K562 (cell line): ENCODE measurements at regions of chr9 and their contacts with region 1.

Region 1: GRCh38 chr9:6907772-6908381 is 150.1 kb downstream of the KDM4C start:
- DNase-seq: peak in 3 of 4 experiments; percentile 12 to 46 (median 13)
- ATAC-seq: peak; percentile 59
- H3K4me3 ChIP-seq: no peak overlapping the region
- H3K27ac ChIP-seq: no peak overlapping the region
- H3K4me1 ChIP-seq: no peaks in the 10 kb centered on the region; a peak in 2 of 5 replicates
- H3K27me3 ChIP-seq: no peaks in the 10 kb centered on the region
- CTCF ChIP-seq: peak in 2 of 3 experiments; percentile 37 to 77; a peak in 4 of 6 replicates
- EP300 ChIP-seq: no peak
- POLR2A ChIP-seq: no peak
- RAD21 ChIP-seq: peak; percentile 44 to 70; a peak in 3 of 4 replicates

Region 2: GRCh38 chr9:6827439-6827838 is 80.4 kb before region 1 on chr9:
- CTCF ChIA-PET with region 1: no interaction called
- POLR2A ChIA-PET with region 1: no interaction called
- in situ Hi-C with region 1: no loop called
- intact Hi-C with region 1: loop called (anchors 5 kb)
- DNase-seq: peak; percentile 24 to 60 (median 34)
- ATAC-seq: peak; percentile 80
- H3K4me3 ChIP-seq: no peak overlapping the region
- H3K27ac ChIP-seq: no peak overlapping the region
- H3K4me1 ChIP-seq: no peaks in the 10 kb centered on the region; a peak in 2 of 5 replicates
- H3K27me3 ChIP-seq: no peaks in the 10 kb centered on the region
- CTCF ChIP-seq: peak in 2 of 3 experiments; percentile 50 to 61; a peak in 3 of 6 replicates
- EP300 ChIP-seq: no peak
- POLR2A ChIP-seq: no peak
- RAD21 ChIP-seq: peak; percentile 47 to 70

Region 3: GRCh38 chr9:7186175-7186574 is 278.3 kb after region 1 on chr9:
- CTCF ChIA-PET with region 1: no interaction called
- POLR2A ChIA-PET with region 1: no interaction called
- in situ Hi-C with region 1: loop called (anchors 25 kb)
- intact Hi-C with region 1: loop called (anchors 1 kb)
- DNase-seq: peak; percentile 11 to 38 (median 25)
- ATAC-seq: peak; percentile 59; the same call in 2 of the 3 replicates
- H3K4me3 ChIP-seq: no peak overlapping the region
- H3K27ac ChIP-seq: no peak overlapping the region
- H3K4me1 ChIP-seq: no peaks in the 10 kb centered on the region
- H3K27me3 ChIP-seq: no peaks in the 10 kb centered on the region
- CTCF ChIP-seq: peak; percentile 55 to 67 (median 59)
- EP300 ChIP-seq: no peak
- POLR2A ChIP-seq: no peak
- RAD21 ChIP-seq: peak; percentile 25 to 70; a peak in 2 of 4 replicates

Region 4: GRCh38 chr9:7266911-7267595 is 359.2 kb after region 1 on chr9:
- CTCF ChIA-PET with region 1: no interaction called
- POLR2A ChIA-PET with region 1: no interaction called
- in situ Hi-C with region 1: no loop called
- intact Hi-C with region 1: loop called (anchors 10 kb)
- DNase-seq: no peak
- ATAC-seq: no peak
- H3K4me3 ChIP-seq: no peak overlapping the region
- H3K27ac ChIP-seq: no peak overlapping the region
- H3K4me1 ChIP-seq: no peaks in the 10 kb centered on the region
- H3K27me3 ChIP-seq: no peaks in the 10 kb centered on the region
- CTCF ChIP-seq: no peak
- EP300 ChIP-seq: no peak
- POLR2A ChIP-seq: no peak
- RAD21 ChIP-seq: no peak

Region 5: DNA sequence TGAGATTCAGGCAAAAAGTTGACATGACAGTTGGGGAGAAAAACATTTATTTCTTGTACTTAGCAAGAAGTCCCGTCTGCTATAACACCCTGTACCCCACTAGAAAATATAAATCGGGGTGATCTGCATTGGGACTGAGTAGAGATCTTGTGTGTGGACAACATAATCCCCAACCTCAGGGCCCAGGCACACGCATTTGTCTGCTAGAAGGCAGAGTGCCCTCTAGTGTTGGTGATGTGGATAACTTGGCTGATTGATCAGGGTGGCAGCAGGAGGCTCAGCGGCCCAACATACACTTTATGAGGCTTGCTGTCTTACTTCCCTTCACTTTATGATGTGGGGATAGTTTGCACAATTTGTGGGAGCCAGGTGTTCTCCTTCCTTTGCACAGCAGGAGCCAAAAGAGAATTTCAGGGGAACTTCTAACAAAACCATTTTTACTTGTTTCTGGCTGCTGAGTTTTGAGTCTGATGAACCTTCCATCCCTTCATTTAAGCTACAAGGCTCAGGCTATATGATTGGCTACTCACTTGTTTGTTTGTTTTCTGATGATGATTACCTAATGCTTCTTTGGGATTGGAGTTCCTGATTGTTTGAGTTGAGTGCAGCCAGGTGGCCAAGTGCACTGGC is 628.5 kb after region 1 on chr9:
- CTCF ChIA-PET with region 1: interaction called, 3 read pairs
- POLR2A ChIA-PET with region 1: no interaction called
- in situ Hi-C with region 1: no loop called
- intact Hi-C with region 1: loop called (anchors 2 kb)
- DNase-seq: peak; percentile 27 to 45 (median 34)
- ATAC-seq: peak; percentile 81
- H3K4me3 ChIP-seq: no peak overlapping the region
- H3K27ac ChIP-seq: no peak overlapping the region
- H3K4me1 ChIP-seq: no peaks in the 10 kb centered on the region
- H3K27me3 ChIP-seq: no peaks in the 10 kb centered on the region
- CTCF ChIP-seq: peak; percentile 56 to 57 (median 57)
- EP300 ChIP-seq: no peak
- POLR2A ChIP-seq: no peak
- RAD21 ChIP-seq: peak; percentile 32 to 58; a peak in 3 of 4 replicates